Body of pancreas (tissue), 4 donors: ENCODE measurements at regions of chr12 and their contacts with region 1.

Region 1: GRCh38 chr12:3273409-3273853 is 196.3 kb downstream of the TSPAN9 start:
- DNase-seq: no peak
- ATAC-seq: no peak
- H3K4me3 ChIP-seq: no peak overlapping the region
- H3K27ac ChIP-seq: no peak overlapping the region
- H3K4me1 ChIP-seq: no peaks in the 10 kb centered on the region
- H3K27me3 ChIP-seq: no peaks in the 10 kb centered on the region
- CTCF ChIP-seq: no peak
- POLR2A ChIP-seq: no peak

Region 2: DNA sequence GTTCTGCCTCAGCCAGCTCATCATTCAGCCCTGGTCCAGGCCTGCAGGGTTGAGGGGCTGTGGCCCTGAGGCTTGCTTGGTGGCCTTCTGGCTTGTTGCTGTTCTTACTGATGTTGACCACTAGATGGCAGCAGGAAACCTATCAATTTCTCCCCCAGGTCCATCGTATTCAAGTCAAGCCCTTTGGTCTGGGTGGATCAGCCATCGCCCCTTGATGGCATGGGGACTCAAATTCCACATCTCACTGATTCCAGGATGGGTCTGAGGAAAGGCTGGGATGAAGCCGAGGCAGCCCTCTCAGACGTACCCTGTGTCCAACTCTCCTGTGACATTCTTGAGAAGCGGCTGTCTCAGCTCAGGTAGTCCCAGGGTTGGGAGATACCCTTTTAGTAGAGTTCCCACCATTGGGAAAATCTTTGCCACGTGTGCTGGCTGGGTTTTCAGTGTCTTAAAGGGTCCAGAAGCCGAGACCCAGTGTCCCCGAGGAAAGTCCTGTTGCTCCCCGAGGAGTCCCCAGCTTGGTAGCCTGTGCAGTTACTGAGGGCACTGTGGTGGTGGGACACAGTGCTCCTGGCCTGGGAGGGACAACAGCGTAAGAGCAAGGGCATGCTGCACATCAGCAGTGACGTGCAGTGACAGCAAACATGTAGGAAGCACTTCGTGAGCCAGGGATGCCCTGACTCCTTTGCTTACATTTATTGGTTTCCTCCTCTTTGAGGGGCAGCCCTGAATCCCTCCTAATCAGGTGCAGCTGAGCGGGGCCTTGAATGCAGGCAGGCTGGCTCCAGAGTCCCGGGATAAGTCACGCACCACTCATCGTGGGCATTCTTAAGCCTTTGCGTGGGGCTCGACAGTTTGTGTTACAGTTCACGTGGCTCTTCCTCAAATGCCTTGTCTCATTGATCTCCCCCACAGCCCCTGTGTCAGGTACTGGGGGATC is 137.6 kb before region 1 on chr12:
- intact Hi-C with region 1: loop called (anchors 5 kb)
- DNase-seq: peak; percentile 36 to 57 (median 48)
- ATAC-seq: peak; percentile 73
- H3K4me3 ChIP-seq: no peak overlapping the region
- H3K27ac ChIP-seq: no peak overlapping the region
- H3K4me1 ChIP-seq: no peaks in the 10 kb centered on the region
- H3K27me3 ChIP-seq: no peaks in the 10 kb centered on the region
- CTCF ChIP-seq: peak; percentile 59 to 82 (median 73)
- POLR2A ChIP-seq: no peak